SK-N-SH (cell line): ENCODE measurements at regions of chr2 and their contacts with region 1.

Region 1: GRCh38 chr2:78999406-78999805 is 26.1 kb upstream of the REG3G start:
- DNase-seq: peak; percentile 42
- H3K4me3 ChIP-seq: no peak overlapping the region
- H3K27ac ChIP-seq: no peak overlapping the region
- H3K4me1 ChIP-seq: peaks cover 0 to 15% of the 10 kb centered on the region in 2 experiments; a peak in 2 of 4 replicates
- H3K27me3 ChIP-seq: no peaks in the 10 kb centered on the region
- CTCF ChIP-seq: peak; percentile 56
- EP300 ChIP-seq: no peak
- RAD21 ChIP-seq: peak; percentile 70

Region 2: GRCh38 chr2:78979380-78980151 is 19.8 kb before region 1 on chr2:
- CTCF ChIA-PET with region 1: interaction called, 16 read pairs
- POLR2A ChIA-PET with region 1: no interaction called
- DNase-seq: peak; percentile 63
- H3K4me3 ChIP-seq: no peak overlapping the region; a peak in 1 of 4 replicates
- H3K27ac ChIP-seq: peak overlapping the region in 1 of 2 experiments; percentile 48; a peak in 1 of 4 replicates
- H3K4me1 ChIP-seq: peaks cover 0 to 3% of the 10 kb centered on the region in 2 experiments; a peak in 1 of 4 replicates
- H3K27me3 ChIP-seq: no peaks in the 10 kb centered on the region
- CTCF ChIP-seq: peak; percentile 77
- EP300 ChIP-seq: no peak
- RAD21 ChIP-seq: peak; percentile 97

Region 3: DNA sequence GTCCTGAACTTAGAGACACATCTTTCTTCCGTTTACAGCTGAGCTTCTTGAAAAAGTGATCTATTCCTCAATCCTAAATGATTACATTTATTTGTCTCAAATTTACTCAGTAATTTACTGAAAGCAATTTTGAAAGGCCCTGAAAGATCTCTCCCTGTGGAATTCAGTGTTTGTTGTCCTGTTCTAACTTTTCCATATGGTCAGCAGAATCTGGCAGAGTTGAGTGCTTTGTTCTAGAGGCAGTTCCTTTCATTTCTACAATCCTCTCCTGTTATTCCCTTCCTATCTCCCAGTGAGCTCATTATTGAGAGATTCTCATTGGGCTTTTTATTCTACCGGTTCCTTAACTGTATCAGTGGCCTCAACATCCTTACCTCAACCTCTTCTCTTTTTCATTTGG is 10.4 kb before region 1 on chr2:
- CTCF ChIA-PET with region 1: interaction called, 24 read pairs
- POLR2A ChIA-PET with region 1: no interaction called
- DNase-seq: no peak
- H3K4me3 ChIP-seq: no peak overlapping the region
- H3K27ac ChIP-seq: no peak overlapping the region
- H3K4me1 ChIP-seq: no peaks in the 10 kb centered on the region; a peak in 1 of 4 replicates
- H3K27me3 ChIP-seq: no peaks in the 10 kb centered on the region
- CTCF ChIP-seq: no peak
- EP300 ChIP-seq: no peak
- RAD21 ChIP-seq: no peak